AG04449 (cell line): ENCODE measurements at regions of chr21 and their contacts with region 1.

Region 1: DNA sequence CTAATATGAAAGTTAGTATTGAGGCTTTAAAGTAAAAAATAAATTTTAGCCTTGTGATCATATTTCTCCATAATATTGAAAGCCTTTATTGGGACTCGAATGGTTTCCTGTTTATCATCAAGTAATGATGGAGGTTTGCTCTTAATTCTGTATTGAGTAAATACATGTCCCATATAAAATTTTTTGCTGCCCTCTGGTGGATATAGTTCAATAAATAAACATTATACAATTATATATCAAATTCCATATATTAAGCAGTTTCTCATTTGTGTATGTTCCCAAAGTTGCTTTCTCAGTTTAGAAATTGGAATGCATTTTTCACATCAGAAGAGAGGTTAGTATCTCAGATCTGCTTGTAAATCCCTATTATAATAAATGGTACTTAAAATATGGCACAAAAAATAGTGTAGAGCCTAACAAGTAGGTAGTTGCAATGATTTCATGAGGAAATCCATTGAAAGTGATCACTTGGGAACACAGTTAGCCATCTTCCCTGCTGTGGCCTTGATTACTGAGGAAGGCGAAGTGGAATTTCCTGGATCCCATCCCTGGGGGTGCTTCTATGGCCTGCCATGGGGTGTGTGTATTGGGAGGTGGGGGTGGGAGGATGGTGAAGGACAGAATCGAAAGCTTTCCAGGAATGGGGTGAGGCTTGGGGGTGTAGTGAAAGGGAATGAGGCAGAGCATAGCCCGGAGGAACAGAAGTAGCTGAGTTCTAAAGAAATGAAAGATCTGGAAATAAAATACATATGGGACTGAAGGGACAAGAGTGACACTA is 84.1 kb upstream of the C21orf91 start:
- DNase-seq: no peak
- H3K4me3 ChIP-seq: no peak overlapping the region
- CTCF ChIP-seq: no peak

Region 2: GRCh38 chr21:17679002-17679600 is 224.1 kb before region 1 on chr21:
- CTCF ChIA-PET with region 1: interaction called, 52 read pairs
- POLR2A ChIA-PET with region 1: no interaction called
- DNase-seq: peak; percentile 19
- H3K4me3 ChIP-seq: no peak overlapping the region
- CTCF ChIP-seq: peak; percentile 62